ENCODE measurements at regions of chr6 and their contacts with region 1.

Region 1: DNA sequence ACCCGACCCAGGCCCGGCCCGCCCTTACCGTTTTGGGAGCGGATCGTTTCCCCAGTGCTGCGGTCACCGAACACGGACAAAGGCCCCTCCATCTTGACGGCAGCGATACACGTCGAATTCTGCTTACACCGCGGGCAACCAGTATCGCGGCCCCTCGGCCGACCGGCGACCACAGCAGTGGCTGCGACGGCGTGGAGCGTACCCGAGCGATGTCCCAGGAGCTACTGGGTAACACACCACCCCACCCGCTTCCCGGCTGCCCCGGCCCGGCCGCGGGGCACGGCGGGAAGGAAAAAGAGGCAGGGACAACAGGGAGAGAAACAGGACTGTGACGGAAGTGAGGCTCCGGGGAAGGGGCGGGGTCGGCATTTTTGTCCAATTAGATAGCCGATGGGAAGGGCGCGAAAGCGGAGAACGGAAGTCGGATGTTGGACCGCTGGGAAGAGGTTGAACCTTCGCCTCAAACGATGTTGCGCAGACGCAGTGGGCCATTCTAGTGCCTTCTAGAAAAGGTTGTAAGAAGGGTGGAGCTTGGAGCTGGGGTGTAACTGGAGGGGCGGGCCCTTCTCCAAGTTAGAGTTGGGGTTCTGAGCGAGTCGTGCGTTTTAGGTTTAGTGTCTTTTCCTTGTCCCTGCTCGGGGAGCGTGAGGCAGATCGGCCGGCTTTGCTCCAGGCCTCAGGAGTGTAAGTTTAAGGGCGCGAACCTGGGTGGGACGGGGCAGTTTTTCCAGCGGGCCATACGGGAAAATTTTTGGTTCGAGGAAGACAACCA is at the start of gene TCP1:
- DNase-seq: peak; percentile 93 to 100 (median 96)
- ATAC-seq: peak; percentile 91
- H3K4me3 ChIP-seq: peak within 1 kb of the TSS; percentile 93
- H3K27ac ChIP-seq: peak within 1 kb of the TSS; percentile 95
- H3K4me1 ChIP-seq: peaks cover 14 to 22% of the 10 kb centered on the region in 2 experiments; a peak in 4 of 5 replicates
- H3K27me3 ChIP-seq: no peaks in the 10 kb centered on the region
- CTCF ChIP-seq: no peak
- EP300 ChIP-seq: peak; percentile 73
- POLR2A ChIP-seq: peak; percentile 98
- RAD21 ChIP-seq: 0 out of 4 replicates have a peak, but pooled peaks of 1 of the 2 experiments have one; percentile 9
- polyA plus RNA-seq, gene TCP1: 475 to 645 TPM

Region 2: DNA sequence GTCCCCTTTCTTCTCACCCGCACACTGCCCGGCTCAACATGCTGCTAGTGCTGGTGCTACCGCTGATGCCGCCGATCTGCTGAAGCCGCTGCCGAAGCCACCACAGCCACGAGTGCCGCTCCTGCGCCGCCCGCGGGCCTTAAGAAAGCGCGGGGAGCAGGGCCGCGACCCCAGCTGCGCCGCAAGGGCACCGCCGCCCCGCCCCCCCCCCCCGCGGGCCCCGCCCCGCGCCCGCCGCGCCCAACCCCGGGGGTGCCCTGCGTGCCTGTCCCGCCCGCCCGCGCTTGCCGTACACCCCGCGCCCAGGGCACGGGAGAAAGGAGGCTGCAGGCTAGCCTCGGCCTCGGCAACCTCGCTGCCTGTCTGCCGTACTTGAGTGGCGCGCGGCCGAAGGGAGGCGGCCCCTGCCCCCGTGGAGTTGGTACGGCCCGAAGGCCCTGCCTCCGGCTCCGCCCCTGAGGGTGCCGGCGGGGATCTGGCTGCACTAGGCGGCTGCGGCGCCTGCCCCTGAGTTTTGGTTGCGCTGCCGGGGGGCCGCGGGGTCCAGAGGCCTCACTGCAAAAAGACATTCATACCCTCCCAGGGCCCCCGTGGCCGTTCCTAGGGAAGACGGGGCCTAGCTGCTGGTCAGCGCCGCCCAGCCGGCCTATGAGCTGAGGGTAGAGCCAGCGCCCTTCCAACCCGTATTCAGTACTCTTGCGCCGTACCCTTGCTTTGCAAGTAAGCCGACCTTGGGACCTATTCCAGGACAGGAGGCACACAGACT is 96.3 kb before region 1 on chr6 and contains the start of gene SOD2:
- CTCF ChIA-PET with region 1: interaction called, 3 read pairs
- POLR2A ChIA-PET with region 1: interaction called, 11 read pairs
- in situ Hi-C with region 1: no loop called
- intact Hi-C with region 1: loop called (anchors 1 kb)
- DNase-seq: peak; percentile 90 to 98 (median 96)
- ATAC-seq: peak; percentile 85
- H3K4me3 ChIP-seq: peak within 1 kb of the TSS; percentile 93
- H3K27ac ChIP-seq: peak within 1 kb of the TSS; percentile 98
- H3K4me1 ChIP-seq: peaks cover 19 to 25% of the 10 kb centered on the region in 2 experiments; a peak in 4 of 5 replicates
- H3K27me3 ChIP-seq: no peaks in the 10 kb centered on the region
- CTCF ChIP-seq: 0 out of 6 replicates have a peak, but pooled peaks of 1 of the 3 experiments have one; percentile 0
- EP300 ChIP-seq: no peak
- POLR2A ChIP-seq: peak; percentile 92
- RAD21 ChIP-seq: 0 out of 4 replicates have a peak, but pooled peaks of 1 of the 2 experiments have one; percentile 24
- polyA plus RNA-seq, gene SOD2: 39.8 to 58.3 TPM

Region 3: DNA sequence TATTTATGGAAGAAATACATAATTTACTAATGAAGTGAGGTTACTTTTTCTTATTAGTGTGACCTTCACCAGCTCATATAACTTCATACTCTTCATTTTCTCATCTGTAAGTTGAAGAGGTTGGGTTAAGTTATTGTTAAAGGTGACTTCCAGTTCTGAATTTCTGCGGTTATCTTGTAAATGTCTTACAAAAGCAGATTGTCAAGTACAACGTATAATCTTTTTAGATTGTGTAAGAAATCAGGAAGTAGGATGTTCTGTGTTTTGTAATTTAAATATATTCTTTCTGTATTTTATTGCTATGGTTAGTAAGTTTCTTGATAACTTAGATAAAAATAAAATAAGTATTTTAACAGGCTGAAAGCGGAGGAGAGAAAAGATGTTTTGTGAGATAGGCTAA is 50.2 kb before region 1 on chr6:
- CTCF ChIA-PET with region 1: no interaction called
- POLR2A ChIA-PET with region 1: interaction called, 10 read pairs
- in situ Hi-C with region 1: no loop called
- intact Hi-C with region 1: no loop called
- DNase-seq: no peak
- ATAC-seq: no peak
- H3K4me3 ChIP-seq: no peak overlapping the region
- H3K27ac ChIP-seq: no peak overlapping the region
- H3K4me1 ChIP-seq: peaks cover 0 to 3% of the 10 kb centered on the region in 2 experiments; a peak in 1 of 5 replicates
- H3K27me3 ChIP-seq: no peaks in the 10 kb centered on the region
- CTCF ChIP-seq: no peak
- EP300 ChIP-seq: no peak
- POLR2A ChIP-seq: no peak
- RAD21 ChIP-seq: no peak

Region 4: DNA sequence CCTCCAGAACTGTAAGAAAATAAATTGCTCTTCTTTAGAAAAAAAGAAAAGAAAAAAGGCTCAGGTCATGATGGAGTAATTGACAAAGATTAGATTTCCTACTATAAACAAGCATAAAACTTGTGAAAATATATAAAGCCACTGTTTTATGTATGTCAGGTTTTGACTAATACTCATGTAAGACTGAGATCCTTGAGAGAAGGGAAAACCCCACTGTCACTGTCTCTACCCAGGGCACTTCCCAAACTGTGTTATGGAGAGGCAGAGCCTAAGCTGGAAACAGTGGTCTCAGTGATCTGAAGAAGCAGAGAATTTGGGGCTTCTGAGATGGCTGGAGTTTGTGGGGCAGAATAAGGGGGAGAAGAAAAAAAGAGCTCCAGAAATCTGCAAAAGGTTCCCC is 20.1 kb before region 1 on chr6:
- CTCF ChIA-PET with region 1: no interaction called
- POLR2A ChIA-PET with region 1: interaction called, 15 read pairs
- in situ Hi-C with region 1: no loop called
- intact Hi-C with region 1: no loop called
- DNase-seq: no peak
- ATAC-seq: no peak
- H3K4me3 ChIP-seq: no peak overlapping the region
- H3K27ac ChIP-seq: no peak overlapping the region
- H3K4me1 ChIP-seq: no peaks in the 10 kb centered on the region
- H3K27me3 ChIP-seq: no peaks in the 10 kb centered on the region
- CTCF ChIP-seq: no peak
- EP300 ChIP-seq: no peak
- POLR2A ChIP-seq: no peak
- RAD21 ChIP-seq: no peak

Region 5: GRCh38 chr6:159806021-159806458 is 16.5 kb after region 1 on chr6:
- CTCF ChIA-PET with region 1: no interaction called
- POLR2A ChIA-PET with region 1: interaction called, 37 read pairs
- in situ Hi-C with region 1: no loop called
- intact Hi-C with region 1: loop called (anchors 1 kb)
- DNase-seq: no peak
- ATAC-seq: peak; percentile 34
- H3K4me3 ChIP-seq: no peak overlapping the region
- H3K27ac ChIP-seq: no peak overlapping the region
- H3K4me1 ChIP-seq: peaks cover 0 to 16% of the 10 kb centered on the region in 2 experiments; a peak in 4 of 5 replicates
- H3K27me3 ChIP-seq: peaks cover 6 to 37% of the 10 kb centered on the region in 2 experiments
- CTCF ChIP-seq: no peak
- EP300 ChIP-seq: no peak
- POLR2A ChIP-seq: no peak
- RAD21 ChIP-seq: no peak

Region 6: DNA sequence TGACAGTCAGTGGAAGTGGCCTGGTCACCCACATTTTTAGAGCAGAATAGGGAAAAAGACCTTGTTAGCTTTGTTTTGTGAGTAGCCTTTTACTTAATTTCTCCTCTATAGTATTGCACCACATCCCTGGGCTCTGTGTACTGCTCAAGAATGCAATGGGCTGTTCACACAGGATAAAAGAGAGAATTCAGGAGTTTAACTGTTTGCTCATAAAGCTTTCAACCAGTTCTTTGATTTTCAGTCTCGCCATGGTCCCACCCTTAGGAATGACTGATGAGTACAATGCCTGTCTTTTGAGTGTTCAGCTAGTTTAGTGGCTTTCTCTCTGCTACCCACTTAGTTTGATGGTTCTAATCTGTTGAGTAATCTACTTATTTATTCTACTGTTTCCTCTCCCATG is 1042.2 kb after region 1 on chr6:
- CTCF ChIA-PET with region 1: no interaction called
- POLR2A ChIA-PET with region 1: no interaction called
- in situ Hi-C with region 1: no loop called
- intact Hi-C with region 1: no loop called
- DNase-seq: no peak
- ATAC-seq: peak; percentile 54
- H3K4me3 ChIP-seq: no peak overlapping the region
- H3K27ac ChIP-seq: peak overlapping the region; percentile 4; the same call in 1 of the 3 replicates
- H3K4me1 ChIP-seq: no peaks in the 10 kb centered on the region
- H3K27me3 ChIP-seq: no peaks in the 10 kb centered on the region
- CTCF ChIP-seq: no peak
- EP300 ChIP-seq: no peak
- POLR2A ChIP-seq: no peak
- RAD21 ChIP-seq: no peak